IMR-90 (cell line): ENCODE measurements at regions of chr11 and their contacts with region 1.

Region 1: GRCh38 chr11:17978553-17979287 is 34.1 kb downstream of the SERGEF start:
- DNase-seq: peak; percentile 53
- ATAC-seq: peak; percentile 96
- H3K4me3 ChIP-seq: no peak overlapping the region
- H3K27ac ChIP-seq: no peak overlapping the region
- H3K4me1 ChIP-seq: no peaks in the 10 kb centered on the region
- H3K27me3 ChIP-seq: no peaks in the 10 kb centered on the region
- CTCF ChIP-seq: peak; percentile 78
- POLR2A ChIP-seq: no peak
- RAD21 ChIP-seq: peak; percentile 80

Region 2: DNA sequence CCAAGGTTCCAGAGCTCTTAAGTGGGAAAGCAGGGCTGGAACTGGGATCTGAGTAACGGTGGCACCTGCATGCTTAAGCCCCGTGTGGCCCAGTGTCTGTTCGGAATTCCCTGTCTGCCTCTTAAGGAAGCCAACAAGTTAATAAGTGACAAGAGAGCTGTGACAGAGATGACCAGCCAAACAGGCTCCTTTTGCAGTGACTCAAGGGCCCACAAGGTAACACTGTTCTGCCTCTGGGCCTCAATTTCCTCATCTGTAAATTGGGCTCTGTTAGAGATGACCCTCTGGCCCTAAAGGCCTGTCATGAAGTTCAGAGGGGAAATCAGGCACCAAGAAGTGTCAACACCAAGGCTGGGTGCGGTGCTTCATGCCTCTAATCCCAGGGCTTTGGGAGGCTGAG is 453.1 kb before region 1 on chr11:
- CTCF ChIA-PET with region 1: no interaction called
- POLR2A ChIA-PET with region 1: no interaction called
- dilution Hi-C with region 1: no loop called
- in situ Hi-C with region 1: no loop called
- intact Hi-C with region 1: no loop called
- DNase-seq: no peak
- ATAC-seq: no peak
- H3K4me3 ChIP-seq: no peak overlapping the region
- H3K27ac ChIP-seq: no peak overlapping the region
- H3K4me1 ChIP-seq: no peaks in the 10 kb centered on the region
- H3K27me3 ChIP-seq: peaks cover 14% of the 10 kb centered on the region
- CTCF ChIP-seq: no peak
- POLR2A ChIP-seq: no peak
- RAD21 ChIP-seq: no peak

Region 3: GRCh38 chr11:17598700-17599459 is 379.8 kb before region 1 on chr11:
- CTCF ChIA-PET with region 1: interaction called, 9 read pairs
- POLR2A ChIA-PET with region 1: no interaction called
- dilution Hi-C with region 1: loop called (anchors 10 kb)
- in situ Hi-C with region 1: loop called (anchors 5 kb)
- intact Hi-C with region 1: loop called (anchors 1 kb)
- DNase-seq: peak; percentile 55
- ATAC-seq: peak; percentile 98
- H3K4me3 ChIP-seq: no peak overlapping the region
- H3K27ac ChIP-seq: no peak overlapping the region
- H3K4me1 ChIP-seq: no peaks in the 10 kb centered on the region
- H3K27me3 ChIP-seq: peaks cover 7% of the 10 kb centered on the region
- CTCF ChIP-seq: peak; percentile 90
- POLR2A ChIP-seq: no peak
- RAD21 ChIP-seq: peak; percentile 90

Region 4: GRCh38 chr11:17760102-17761029 is 218.4 kb before region 1 on chr11:
- CTCF ChIA-PET with region 1: interaction called, 21 read pairs
- POLR2A ChIA-PET with region 1: no interaction called
- dilution Hi-C with region 1: no loop called
- in situ Hi-C with region 1: loop called (anchors 5 kb)
- intact Hi-C with region 1: loop called (anchors 1 kb)
- DNase-seq: peak; percentile 39
- ATAC-seq: peak; percentile 91
- H3K4me3 ChIP-seq: no peak overlapping the region
- H3K27ac ChIP-seq: no peak overlapping the region
- H3K4me1 ChIP-seq: no peaks in the 10 kb centered on the region
- H3K27me3 ChIP-seq: peaks cover 13% of the 10 kb centered on the region; the same call in 1 of the 2 replicates
- CTCF ChIP-seq: peak; percentile 73
- POLR2A ChIP-seq: no peak
- RAD21 ChIP-seq: peak; percentile 83

Region 5: DNA sequence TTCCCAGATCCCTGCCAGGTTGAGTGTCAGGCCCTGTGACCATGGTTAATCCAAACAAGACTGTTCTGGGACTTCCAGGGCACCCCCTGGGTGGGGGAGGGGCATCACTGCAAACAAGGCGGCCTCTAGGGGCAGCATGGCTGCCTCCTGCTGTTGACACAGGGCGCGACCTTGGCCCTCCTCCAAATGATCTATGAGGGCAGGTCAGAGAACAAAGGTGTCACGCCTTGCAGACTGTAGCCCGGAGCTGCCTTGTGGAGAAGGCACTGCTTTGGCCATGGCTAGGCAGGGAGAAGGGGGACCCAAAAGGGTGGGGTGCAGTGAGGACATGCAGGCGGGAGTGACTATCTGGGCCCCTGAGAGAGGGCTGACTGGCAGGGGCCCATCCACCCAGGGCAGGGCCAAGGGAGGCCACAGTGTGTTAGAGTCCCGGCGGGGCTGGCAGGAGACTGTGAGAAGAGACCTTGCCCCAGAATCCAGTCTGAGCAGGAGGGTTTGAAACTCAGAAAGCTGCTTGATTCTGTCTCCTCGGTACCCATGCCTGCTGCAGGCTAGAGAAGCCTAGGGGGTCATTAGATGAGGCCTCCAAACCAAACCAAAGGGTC is 208.6 kb before region 1 on chr11:
- CTCF ChIA-PET with region 1: interaction called, 7 read pairs
- POLR2A ChIA-PET with region 1: no interaction called
- dilution Hi-C with region 1: no loop called
- in situ Hi-C with region 1: no loop called
- intact Hi-C with region 1: loop called (anchors 1 kb)
- DNase-seq: no peak
- ATAC-seq: no peak
- H3K4me3 ChIP-seq: no peak overlapping the region
- H3K27ac ChIP-seq: no peak overlapping the region
- H3K4me1 ChIP-seq: no peaks in the 10 kb centered on the region
- H3K27me3 ChIP-seq: peaks cover 4% of the 10 kb centered on the region; the same call in 1 of the 2 replicates
- CTCF ChIP-seq: no peak
- POLR2A ChIP-seq: no peak
- RAD21 ChIP-seq: no peak

Region 6: GRCh38 chr11:17786824-17787525 is 191.7 kb before region 1 on chr11:
- CTCF ChIA-PET with region 1: no interaction called
- POLR2A ChIA-PET with region 1: no interaction called
- dilution Hi-C with region 1: no loop called
- in situ Hi-C with region 1: no loop called
- intact Hi-C with region 1: no loop called
- DNase-seq: peak; percentile 96
- ATAC-seq: peak; percentile 92
- H3K4me3 ChIP-seq: no peak overlapping the region
- H3K27ac ChIP-seq: peak overlapping the region; percentile 90
- H3K4me1 ChIP-seq: peaks cover 20% of the 10 kb centered on the region
- H3K27me3 ChIP-seq: no peaks in the 10 kb centered on the region
- CTCF ChIP-seq: peak; percentile 21; the same call in 1 of the 2 replicates
- POLR2A ChIP-seq: no peak; the same call in 1 of the 2 replicates
- RAD21 ChIP-seq: peak; percentile 42

Region 7: GRCh38 chr11:17846852-17847453 is 131.8 kb before region 1 on chr11:
- CTCF ChIA-PET with region 1: interaction called, 7 read pairs
- POLR2A ChIA-PET with region 1: no interaction called
- dilution Hi-C with region 1: no loop called
- in situ Hi-C with region 1: no loop called
- intact Hi-C with region 1: loop called (anchors 1 kb)
- DNase-seq: peak; percentile 73
- ATAC-seq: peak; percentile 71
- H3K4me3 ChIP-seq: no peak overlapping the region
- H3K27ac ChIP-seq: no peak overlapping the region
- H3K4me1 ChIP-seq: peaks cover 16% of the 10 kb centered on the region
- H3K27me3 ChIP-seq: no peaks in the 10 kb centered on the region
- CTCF ChIP-seq: peak; percentile 54
- POLR2A ChIP-seq: no peak
- RAD21 ChIP-seq: peak; percentile 64

Region 8: GRCh38 chr11:18144243-18144642 is 165.5 kb after region 1 on chr11:
- CTCF ChIA-PET with region 1: no interaction called
- POLR2A ChIA-PET with region 1: no interaction called
- dilution Hi-C with region 1: no loop called
- in situ Hi-C with region 1: no loop called
- intact Hi-C with region 1: no loop called
- DNase-seq: peak; percentile 7
- ATAC-seq: no peak
- H3K4me3 ChIP-seq: no peak overlapping the region
- H3K27ac ChIP-seq: no peak overlapping the region
- H3K4me1 ChIP-seq: no peaks in the 10 kb centered on the region
- H3K27me3 ChIP-seq: no peaks in the 10 kb centered on the region
- CTCF ChIP-seq: no peak
- POLR2A ChIP-seq: no peak
- RAD21 ChIP-seq: no peak